Activated CD8-positive, alpha-beta memory T cell treated with anti-CD3 and anti-CD28 coated beads, Interleukin-2, amount 10 ng/mL, durations not matched to agents 7 days and 5 days (primary cell): ENCODE measurements at regions of chr3 and their contacts with region 1.

Region 1: GRCh38 chr3:51498876-51499738 is 708 bp downstream of the DCAF1 start:
- DNase-seq: peak; percentile 93
- ATAC-seq: peak; percentile 73
- H3K4me3 Mint-ChIP-seq: peak overlapping the region; percentile 99
- H3K27ac Mint-ChIP-seq: peak overlapping the region; percentile 92
- H3K4me1 Mint-ChIP-seq: peaks cover 25% of the 10 kb centered on the region
- H3K27me3 Mint-ChIP-seq: no peaks in the 10 kb centered on the region

Region 2: GRCh38 chr3:51371943-51372557 is 127.1 kb before region 1 on chr3:
- CTCF ChIA-PET with region 1: no interaction called
- DNase-seq: peak; percentile 68
- ATAC-seq: peak; percentile 66
- H3K4me3 Mint-ChIP-seq: no peak overlapping the region
- H3K27ac Mint-ChIP-seq: no peak overlapping the region
- H3K4me1 Mint-ChIP-seq: no peaks in the 10 kb centered on the region
- H3K27me3 Mint-ChIP-seq: no peaks in the 10 kb centered on the region

Region 3: DNA sequence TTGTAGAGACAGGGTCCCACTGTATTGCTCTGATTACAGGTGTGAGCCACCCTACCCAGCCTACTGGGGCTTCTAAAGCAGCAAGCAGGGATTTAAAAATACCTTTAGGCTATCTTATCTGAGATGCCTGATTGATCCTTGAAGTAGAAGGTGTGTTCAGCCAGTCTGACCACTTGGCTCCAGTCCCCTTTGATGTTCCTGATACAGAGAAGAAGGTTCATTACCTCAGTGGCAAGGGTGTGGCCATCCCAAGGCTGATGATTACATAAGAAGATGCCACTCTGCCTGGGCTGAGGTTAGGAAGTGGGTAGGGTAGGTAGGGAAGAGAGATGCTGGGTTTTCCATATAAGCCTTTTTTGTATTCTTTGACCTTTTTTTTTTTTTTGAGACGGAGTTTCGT is 11.9 kb after region 1 on chr3:
- CTCF ChIA-PET with region 1: interaction called, 15 read pairs
- DNase-seq: no peak
- ATAC-seq: no peak
- H3K4me3 Mint-ChIP-seq: no peak overlapping the region
- H3K27ac Mint-ChIP-seq: no peak overlapping the region
- H3K4me1 Mint-ChIP-seq: peaks cover 13% of the 10 kb centered on the region
- H3K27me3 Mint-ChIP-seq: no peaks in the 10 kb centered on the region

Region 4: GRCh38 chr3:51799879-51800749 is 301.0 kb after region 1 on chr3:
- CTCF ChIA-PET with region 1: interaction called, 29 read pairs
- DNase-seq: peak; percentile 38
- ATAC-seq: peak; percentile 54
- H3K4me3 Mint-ChIP-seq: no peak overlapping the region
- H3K27ac Mint-ChIP-seq: no peak overlapping the region
- H3K4me1 Mint-ChIP-seq: peaks cover 52% of the 10 kb centered on the region
- H3K27me3 Mint-ChIP-seq: peaks cover 14% of the 10 kb centered on the region